ENCODE measurements at regions of chr16 and their contacts with region 1.

Region 1: GRCh38 chr16:7182510-7183109 is 150.0 kb upstream of the RBFOX1 start:
- DNase-seq: no peak
- H3K4me3 ChIP-seq: no peak overlapping the region
- H3K27ac ChIP-seq: no peak overlapping the region
- H3K4me1 ChIP-seq: no peaks in the 10 kb centered on the region
- H3K27me3 ChIP-seq: no peaks in the 10 kb centered on the region
- CTCF ChIP-seq: no peak

Region 2: DNA sequence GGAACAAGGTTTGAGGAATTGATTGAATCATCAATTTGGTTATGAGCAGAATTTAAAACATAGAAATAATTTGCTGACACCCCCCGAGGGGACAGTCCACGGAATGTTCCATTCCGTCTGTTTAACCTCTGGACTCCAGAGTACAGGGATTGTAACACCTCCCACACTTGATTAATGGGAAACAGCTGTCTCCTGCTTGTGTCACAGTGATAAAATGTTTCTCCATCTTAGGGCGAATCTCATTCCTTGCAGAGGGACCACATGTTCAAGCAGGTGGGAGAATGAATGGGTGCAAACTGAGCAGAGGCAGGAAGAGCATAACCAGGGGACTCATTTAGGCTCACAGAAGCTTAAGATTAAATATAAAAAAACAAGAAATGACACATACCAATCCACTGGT is 99.5 kb before region 1 on chr16:
- CTCF ChIA-PET with region 1: no interaction called
- dilution Hi-C with region 1: no loop called
- in situ Hi-C with region 1: no loop called
- intact Hi-C with region 1: no loop called
- DNase-seq: no peak
- H3K4me3 ChIP-seq: no peak overlapping the region
- H3K27ac ChIP-seq: no peak overlapping the region
- H3K4me1 ChIP-seq: no peaks in the 10 kb centered on the region
- H3K27me3 ChIP-seq: no peaks in the 10 kb centered on the region
- CTCF ChIP-seq: no peak

Region 3: GRCh38 chr16:7111265-7111664 is 71.3 kb before region 1 on chr16:
- CTCF ChIA-PET with region 1: no interaction called
- dilution Hi-C with region 1: no loop called
- in situ Hi-C with region 1: no loop called
- intact Hi-C with region 1: no loop called
- DNase-seq: no peak
- H3K4me3 ChIP-seq: no peak overlapping the region
- H3K27ac ChIP-seq: no peak overlapping the region
- H3K4me1 ChIP-seq: no peaks in the 10 kb centered on the region
- H3K27me3 ChIP-seq: no peaks in the 10 kb centered on the region
- CTCF ChIP-seq: no peak

Region 4: GRCh38 chr16:7148606-7149005 is 34.0 kb before region 1 on chr16:
- CTCF ChIA-PET with region 1: no interaction called
- dilution Hi-C with region 1: loop called (anchors 5 kb)
- in situ Hi-C with region 1: no loop called
- intact Hi-C with region 1: no loop called
- DNase-seq: no peak
- H3K4me3 ChIP-seq: no peak overlapping the region
- H3K27ac ChIP-seq: no peak overlapping the region
- H3K4me1 ChIP-seq: no peaks in the 10 kb centered on the region
- H3K27me3 ChIP-seq: no peaks in the 10 kb centered on the region
- CTCF ChIP-seq: no peak

Measured in mammary epithelial cell (primary cell).